Cardiac septum (tissue), 1 donor: ENCODE measurements at regions of chr2 and their contacts with region 1.

Region 1: DNA sequence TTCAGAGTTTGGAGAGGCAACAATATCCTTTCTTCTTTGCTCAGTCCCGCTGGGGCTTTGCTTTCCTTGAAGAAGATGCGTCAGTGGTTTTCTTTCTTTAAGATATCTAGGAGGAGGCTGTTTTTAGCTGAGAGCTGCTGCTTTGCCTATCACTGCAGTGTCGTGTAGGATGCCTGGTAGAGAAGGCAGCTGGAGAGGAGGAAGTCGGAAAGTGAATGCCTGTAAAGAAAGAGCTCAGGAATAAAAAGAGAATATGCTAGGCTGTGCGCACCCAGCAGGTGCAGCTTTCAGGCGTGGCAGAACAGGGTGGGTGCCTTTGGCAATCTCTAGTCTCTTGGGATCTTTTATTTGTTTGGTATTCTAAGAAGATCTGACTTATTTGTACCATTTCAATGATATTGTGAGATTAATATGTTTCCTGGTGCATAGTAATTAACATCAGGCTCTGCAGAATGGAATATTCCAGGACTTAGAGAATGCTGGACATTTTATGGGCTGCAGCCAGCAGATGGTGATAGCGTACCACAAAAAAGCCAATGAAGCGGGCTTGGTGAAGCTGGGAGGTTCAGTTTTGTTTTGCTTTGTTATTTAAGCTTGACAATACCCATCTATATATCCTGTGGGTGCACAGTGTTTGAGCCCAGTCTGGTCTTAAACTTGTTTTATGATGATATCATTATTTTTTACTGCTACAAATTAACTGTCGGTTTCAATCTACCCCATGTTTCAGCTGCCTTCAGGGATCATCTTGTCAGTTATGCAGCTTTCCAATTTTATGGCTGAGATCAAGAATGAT is 34.9 kb downstream of the CAVIN2 start:
- DNase-seq: no peak

Region 2: DNA sequence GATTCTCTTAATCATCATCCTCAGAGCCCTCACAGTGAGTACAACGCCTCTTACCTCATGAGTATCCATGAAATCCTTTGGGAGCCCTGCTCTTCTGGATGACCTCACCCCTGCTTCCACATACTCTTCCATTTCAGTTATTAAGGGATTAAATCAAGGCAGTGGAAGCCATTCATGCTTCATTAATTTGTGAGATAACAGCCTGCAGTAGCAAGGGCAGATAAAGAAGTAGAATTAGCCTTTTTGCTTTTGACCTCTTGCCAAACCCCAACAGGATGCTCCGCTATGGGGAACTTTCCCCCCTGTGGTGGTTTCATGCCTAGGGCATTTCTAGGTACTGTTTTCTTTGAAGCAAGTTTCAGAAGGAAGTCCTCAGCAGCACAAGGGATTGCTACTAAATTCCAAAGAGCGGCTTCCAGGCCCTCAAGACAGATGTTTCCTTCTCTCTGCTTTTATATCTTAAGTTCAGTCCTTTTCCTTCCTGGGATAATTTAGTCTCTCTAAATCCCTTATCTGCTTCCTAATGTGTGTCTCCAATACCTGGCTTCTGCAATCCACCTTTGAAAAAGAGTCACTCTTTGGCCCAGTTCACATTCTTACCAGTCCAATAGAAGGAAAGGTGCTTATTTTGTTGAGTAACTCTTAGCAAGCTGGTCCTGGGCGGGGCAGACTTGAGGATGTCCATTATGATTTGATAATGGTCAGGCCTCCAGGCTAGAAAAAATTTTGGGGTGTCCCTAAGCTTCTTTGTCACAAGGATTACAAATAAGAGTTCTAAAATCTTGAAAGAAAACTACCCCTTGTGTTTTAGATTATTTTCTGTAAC is 489.9 kb before region 1 on chr2:
- intact Hi-C with region 1: no loop called
- DNase-seq: no peak

Region 3: GRCh38 chr2:191907545-191907944 is 95.5 kb after region 1 on chr2:
- intact Hi-C with region 1: loop called (anchors 10 kb)
- DNase-seq: no peak

Region 4: DNA sequence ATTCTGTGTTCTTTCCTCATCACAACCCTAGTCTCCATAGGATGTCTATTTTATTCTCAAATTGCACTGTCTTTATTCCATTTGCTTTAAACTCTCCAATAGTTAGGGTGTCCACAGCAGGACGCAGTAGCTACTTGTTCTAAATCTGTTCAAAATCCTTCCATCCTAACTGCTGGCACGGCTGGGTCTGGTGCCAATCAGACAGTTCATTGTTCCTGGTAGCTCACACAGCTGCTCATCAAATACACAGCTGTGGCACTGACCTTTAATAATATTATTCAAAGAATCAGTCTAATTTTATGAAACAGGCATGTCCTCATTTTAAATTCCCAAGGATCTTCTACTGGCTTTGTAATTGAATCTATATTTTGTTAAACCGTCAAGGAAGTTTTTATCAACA is 442.4 kb after region 1 on chr2:
- intact Hi-C with region 1: no loop called
- DNase-seq: no peak